ENCODE measurements at regions of chr12 and their contacts with region 1.

Region 1: GRCh38 chr12:79886917-79887519 is 47.9 kb downstream of the PPP1R12A start:
- DNase-seq: no peak
- H3K4me3 ChIP-seq: no peak overlapping the region
- CTCF ChIP-seq: peak; percentile 49

Region 2: GRCh38 chr12:79988368-79988767 is 101.3 kb after region 1 on chr12:
- CTCF ChIA-PET with region 1: no interaction called
- POLR2A ChIA-PET with region 1: no interaction called
- DNase-seq: no peak
- H3K4me3 ChIP-seq: no peak overlapping the region
- CTCF ChIP-seq: no peak

Region 3: DNA sequence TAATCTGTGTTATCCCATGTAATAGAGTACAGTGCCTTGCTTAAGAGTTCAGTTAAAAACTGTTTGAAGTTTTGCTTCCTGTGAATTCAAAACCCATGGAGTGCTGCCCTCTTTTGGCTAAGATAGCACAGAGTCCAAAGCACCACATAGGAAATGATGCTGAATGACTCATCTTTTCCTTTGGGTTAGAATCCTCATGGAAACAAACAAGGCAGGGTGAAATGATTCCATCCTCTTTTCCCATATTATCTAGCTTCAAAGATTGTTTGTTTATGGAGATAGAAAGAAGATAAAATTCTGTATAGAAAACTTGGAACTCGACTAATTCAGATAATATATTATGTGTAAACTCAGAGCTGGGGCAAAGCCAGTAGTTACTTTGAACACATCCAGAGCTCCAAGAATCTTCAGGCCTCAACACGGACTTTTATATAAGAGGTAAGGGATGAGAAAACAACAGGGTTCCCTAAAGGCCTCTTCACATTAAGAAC is 299.8 kb after region 1 on chr12:
- CTCF ChIA-PET with region 1: interaction called, 10 read pairs
- POLR2A ChIA-PET with region 1: no interaction called
- DNase-seq: peak; percentile 70
- H3K4me3 ChIP-seq: no peak overlapping the region
- CTCF ChIP-seq: peak; percentile 70